Lower leg skin (tissue), 4 donors: ENCODE measurements at regions of chr11 and their contacts with region 1.

Region 1: DNA sequence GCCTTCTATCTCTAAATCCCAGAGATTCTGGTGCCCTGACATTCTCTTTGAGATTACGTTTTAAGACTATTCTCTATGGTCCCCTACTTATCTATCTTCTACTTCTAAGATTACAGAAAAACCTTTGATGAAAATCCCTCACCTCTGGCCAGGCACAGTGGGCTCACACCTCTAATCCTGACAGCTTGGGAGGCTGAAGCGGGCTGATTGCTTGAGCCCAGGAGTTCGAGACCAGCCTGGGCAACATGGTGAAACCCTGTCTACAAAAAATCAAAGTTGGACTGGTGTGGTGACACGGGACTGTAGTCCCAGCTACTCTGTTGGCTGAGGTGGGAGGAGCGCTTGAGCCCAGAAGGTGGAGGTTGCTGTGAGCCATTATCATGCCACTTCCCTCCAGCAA is 14.4 kb downstream of the NUP98 start:
- DNase-seq: no peak
- H3K4me3 ChIP-seq: no peak overlapping the region
- CTCF ChIP-seq: no peak
- POLR2A ChIP-seq: no peak

Region 2: GRCh38 chr11:3764266-3764665 is 18.7 kb before region 1 on chr11:
- intact Hi-C with region 1: loop called (anchors 2 kb)
- DNase-seq: no peak
- H3K4me3 ChIP-seq: no peak overlapping the region
- CTCF ChIP-seq: no peak
- POLR2A ChIP-seq: no peak

Region 3: DNA sequence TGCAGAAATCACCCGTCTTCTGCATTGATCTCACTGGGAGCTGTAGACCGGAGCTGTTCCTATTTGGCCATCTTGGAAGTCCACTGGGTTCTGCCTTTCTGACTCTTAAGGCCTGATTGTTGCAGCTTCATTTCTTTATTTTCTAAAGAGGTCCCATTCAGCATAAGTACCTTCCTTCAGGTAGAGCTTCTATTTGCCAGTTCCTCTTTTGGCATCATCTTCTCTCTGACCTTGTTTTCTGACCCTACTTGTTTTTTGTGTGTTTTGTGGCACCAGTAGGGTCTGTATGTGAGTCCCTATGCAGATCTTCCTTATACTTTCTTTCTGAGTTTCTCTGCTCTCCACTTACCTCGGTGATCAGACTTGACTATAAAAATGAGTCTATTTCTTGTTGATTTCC is 234.2 kb after region 1 on chr11:
- intact Hi-C with region 1: no loop called
- DNase-seq: no peak
- H3K4me3 ChIP-seq: no peak overlapping the region
- CTCF ChIP-seq: no peak
- POLR2A ChIP-seq: no peak